ENCODE measurements at regions of chr19 and their contacts with region 1.

Region 1: DNA sequence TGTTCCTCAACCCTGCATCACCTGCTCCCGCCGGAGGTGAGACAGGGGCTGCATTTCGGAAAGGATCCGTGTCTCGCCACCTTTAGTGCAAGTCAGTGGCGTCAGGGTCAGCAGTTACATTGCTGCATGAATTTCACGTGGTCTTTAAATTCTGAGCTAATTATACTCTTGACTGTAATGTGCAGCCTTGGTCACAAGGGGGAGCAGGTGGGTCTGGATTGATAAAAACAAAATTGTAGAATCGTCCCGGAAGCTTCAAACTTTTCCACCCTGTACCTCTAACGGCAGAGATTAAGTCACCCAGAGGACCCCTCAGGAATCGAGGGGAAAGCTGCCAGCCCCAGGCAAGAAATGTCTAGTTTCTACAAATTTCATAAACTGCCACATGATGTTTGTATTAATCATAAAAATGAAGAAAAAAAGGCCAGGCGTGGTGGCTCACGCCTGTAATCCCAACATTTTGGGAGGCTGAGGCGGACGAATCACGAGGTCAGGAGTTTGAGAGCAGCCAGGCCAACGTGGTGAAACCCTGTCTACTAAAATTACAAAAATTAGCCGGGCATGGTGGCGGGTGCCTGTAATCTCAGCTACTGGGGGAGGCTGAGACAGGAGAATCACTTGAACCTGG is 20.2 kb downstream of the BBC3 start:
- DNase-seq: no peak

Region 2: GRCh38 chr19:47253467-47253881 is 42.7 kb after region 1 on chr19:
- intact Hi-C with region 1: loop called (anchors 2 kb)
- DNase-seq: no peak

Measured in posterior vena cava (tissue), 2 donors.